ENCODE measurements at regions of chr12 and their contacts with region 1.

Region 1: GRCh38 chr12:113208041-113208934 is 13.0 kb upstream of the TPCN1 start:
- DNase-seq: peak in 1 of 6 donors; percentile 49
- ATAC-seq: peak in 3 of 4 donors; percentile 27 to 70 (median 58)
- H3K4me3 ChIP-seq: no peak overlapping the region
- H3K27ac ChIP-seq: peak overlapping the region in 2 of 4 donors; percentile 47 to 48
- H3K4me1 ChIP-seq: peaks cover 0 to 6% (median 0%) of the 10 kb centered on the region in 3 donors
- H3K27me3 ChIP-seq: no peaks in the 10 kb centered on the region
- CTCF ChIP-seq: no peak

Region 2: GRCh38 chr12:113005754-113006153 is 202.5 kb before region 1 on chr12:
- intact Hi-C with region 1: no loop called
- DNase-seq: no peak
- ATAC-seq: no peak
- H3K4me3 ChIP-seq: no peak overlapping the region
- H3K27ac ChIP-seq: no peak overlapping the region
- H3K4me1 ChIP-seq: no peaks in the 10 kb centered on the region
- H3K27me3 ChIP-seq: no peaks in the 10 kb centered on the region
- CTCF ChIP-seq: no peak

Region 3: DNA sequence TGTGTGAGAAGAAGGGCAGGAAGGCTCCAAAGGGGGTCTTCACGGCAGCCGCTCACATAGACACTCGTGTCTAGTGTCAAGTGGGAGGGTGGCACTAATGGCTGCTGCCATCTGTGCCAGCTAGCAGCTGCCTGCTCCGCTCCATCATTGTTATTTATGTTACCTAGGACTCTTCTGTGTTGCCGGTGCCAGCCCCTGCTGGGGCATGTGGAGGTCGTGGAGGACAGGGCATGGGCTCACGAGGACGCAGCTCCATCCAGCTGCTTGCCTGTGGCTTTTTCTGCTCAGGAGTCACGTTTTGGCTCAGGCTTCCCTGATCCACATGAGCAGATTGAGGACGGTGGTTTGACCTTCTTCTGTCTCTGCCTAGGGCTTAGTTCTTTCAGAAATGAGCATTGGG is 44.2 kb after region 1 on chr12:
- intact Hi-C with region 1: loop called in 1 of 3 experiments (anchors 10 kb)
- DNase-seq: peak in 2 of 6 donors; percentile 19
- ATAC-seq: no peak
- H3K4me3 ChIP-seq: no peak overlapping the region
- H3K27ac ChIP-seq: no peak overlapping the region
- H3K4me1 ChIP-seq: peaks cover 14 to 19% (median 14%) of the 10 kb centered on the region in 3 donors
- H3K27me3 ChIP-seq: no peaks in the 10 kb centered on the region
- CTCF ChIP-seq: no peak

Region 4: GRCh38 chr12:113461666-113462065 is 253.4 kb after region 1 on chr12:
- intact Hi-C with region 1: no loop called
- DNase-seq: no peak
- ATAC-seq: peak in 2 of 4 donors; percentile 19 to 40
- H3K4me3 ChIP-seq: no peak overlapping the region
- H3K27ac ChIP-seq: no peak overlapping the region
- H3K4me1 ChIP-seq: peaks cover 3 to 14% (median 6%) of the 10 kb centered on the region in 3 donors
- H3K27me3 ChIP-seq: peaks cover 8 to 38% (median 12%) of the 10 kb centered on the region in 4 donors
- CTCF ChIP-seq: no peak

Region 5: DNA sequence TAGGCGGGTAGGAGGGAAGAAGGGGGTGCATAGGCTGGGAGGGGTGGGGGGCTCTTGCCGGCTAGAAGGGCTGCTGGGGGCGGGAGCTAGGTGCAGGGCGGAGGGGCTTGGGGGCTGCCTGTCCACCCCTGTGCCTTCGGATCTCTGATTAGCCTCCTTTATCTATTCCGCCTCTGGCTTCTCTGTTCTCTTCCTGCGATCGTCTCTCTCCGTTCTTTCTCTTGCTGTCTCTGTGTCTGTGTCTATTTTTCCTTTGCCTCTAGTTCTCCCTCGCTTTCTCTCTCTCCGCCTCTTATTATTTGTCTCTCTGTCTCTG is 430.1 kb after region 1 on chr12:
- intact Hi-C with region 1: no loop called
- DNase-seq: no peak
- ATAC-seq: no peak
- H3K4me3 ChIP-seq: no peak overlapping the region
- H3K27ac ChIP-seq: no peak overlapping the region
- H3K4me1 ChIP-seq: no peaks in the 10 kb centered on the region
- H3K27me3 ChIP-seq: no peaks in the 10 kb centered on the region
- CTCF ChIP-seq: no peak